ENCODE measurements at regions of chr7 and their contacts with region 1.

Region 1: GRCh38 chr7:2567679-2568278 is 9.0 kb downstream of the IQCE start:
- DNase-seq: peak in 1 of 2 donors; percentile 34
- ATAC-seq: peak; percentile 79 to 89 (median 82)
- H3K4me3 ChIP-seq: peak overlapping the region in 2 of 10 donors; percentile 20 to 21
- H3K27ac ChIP-seq: no peak overlapping the region
- H3K4me1 ChIP-seq: peaks cover 0 to 18% (median 11%) of the 10 kb centered on the region in 9 donors
- H3K27me3 ChIP-seq: no peaks in the 10 kb centered on the region
- CTCF ChIP-seq: peak; percentile 39 to 72 (median 64)

Region 2: GRCh38 chr7:2451171-2452073 is 116.4 kb before region 1 on chr7:
- intact Hi-C with region 1: loop called in 1 of 10 experiments (anchors 10 kb)
- DNase-seq: peak; percentile 87 to 91
- ATAC-seq: peak; percentile 95 to 98 (median 98)
- H3K4me3 ChIP-seq: peak overlapping the region in 9 of 10 donors; percentile 32 to 58 (median 55)
- H3K27ac ChIP-seq: peak overlapping the region in 5 of 10 donors; percentile 8 to 62 (median 44)
- H3K4me1 ChIP-seq: peaks cover 7 to 15% (median 11%) of the 10 kb centered on the region in 9 donors
- H3K27me3 ChIP-seq: no peaks in the 10 kb centered on the region
- CTCF ChIP-seq: peak; percentile 75 to 95 (median 91)

Region 3: DNA sequence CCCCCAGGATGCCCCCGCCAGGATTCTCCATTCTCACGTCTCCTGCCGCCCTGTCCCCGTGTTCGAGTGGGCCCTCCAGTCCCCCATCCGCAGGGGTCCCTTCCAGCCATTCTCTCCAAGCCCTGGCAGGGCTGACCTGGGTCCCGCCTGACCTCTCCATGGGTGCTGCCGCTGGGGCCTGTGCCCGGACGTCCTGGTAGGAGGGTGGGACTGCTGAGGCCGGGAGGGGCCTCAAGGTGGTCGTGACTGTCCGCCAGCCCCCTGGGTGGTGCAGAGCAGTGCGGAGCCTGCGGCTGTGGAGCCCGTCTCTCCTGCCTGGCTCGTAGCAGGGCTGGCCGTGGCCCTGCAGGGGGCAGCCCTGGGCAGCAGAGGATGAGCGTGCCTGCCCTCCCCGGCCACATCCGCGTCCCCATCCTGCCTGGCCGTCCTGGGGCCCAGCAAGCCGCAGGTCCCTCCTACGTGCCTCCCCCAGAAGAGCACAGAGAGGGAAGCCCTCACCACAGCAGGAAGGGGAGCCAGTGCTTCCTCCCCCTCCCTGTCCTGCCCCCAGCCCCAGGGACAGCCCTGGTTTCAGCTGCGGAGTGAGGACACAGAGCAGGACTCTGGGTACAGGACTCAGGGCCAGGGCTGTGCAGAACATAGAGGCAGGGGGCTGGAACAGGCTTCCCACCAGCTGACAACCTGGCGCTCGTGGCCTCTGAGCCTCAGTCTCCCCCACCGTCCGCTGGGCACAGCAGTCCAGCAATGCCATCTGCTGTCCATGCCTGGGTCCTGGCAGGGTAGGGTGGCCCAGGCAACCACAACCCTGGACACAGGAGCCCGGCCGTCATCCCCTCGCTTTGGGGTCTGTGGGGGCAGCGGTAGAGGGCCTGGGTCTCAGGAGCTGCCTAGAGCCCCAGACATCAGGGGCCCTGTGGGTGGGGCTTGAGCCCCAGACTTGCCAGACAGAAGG is 90.1 kb before region 1 on chr7:
- intact Hi-C with region 1: loop called in 1 of 10 experiments (anchors 10 kb)
- DNase-seq: peak; percentile 64 to 77
- ATAC-seq: peak; percentile 82 to 90 (median 86)
- H3K4me3 ChIP-seq: peak overlapping the region in 2 of 10 donors; percentile 7 to 15
- H3K27ac ChIP-seq: peak overlapping the region in 4 of 10 donors; percentile 14 to 56 (median 26)
- H3K4me1 ChIP-seq: peaks cover 14 to 37% (median 29%) of the 10 kb centered on the region in 9 donors
- H3K27me3 ChIP-seq: peaks cover 0 to 21% (median 8%) of the 10 kb centered on the region in 7 donors
- CTCF ChIP-seq: peak; percentile 60 to 89 (median 77)

Region 4: DNA sequence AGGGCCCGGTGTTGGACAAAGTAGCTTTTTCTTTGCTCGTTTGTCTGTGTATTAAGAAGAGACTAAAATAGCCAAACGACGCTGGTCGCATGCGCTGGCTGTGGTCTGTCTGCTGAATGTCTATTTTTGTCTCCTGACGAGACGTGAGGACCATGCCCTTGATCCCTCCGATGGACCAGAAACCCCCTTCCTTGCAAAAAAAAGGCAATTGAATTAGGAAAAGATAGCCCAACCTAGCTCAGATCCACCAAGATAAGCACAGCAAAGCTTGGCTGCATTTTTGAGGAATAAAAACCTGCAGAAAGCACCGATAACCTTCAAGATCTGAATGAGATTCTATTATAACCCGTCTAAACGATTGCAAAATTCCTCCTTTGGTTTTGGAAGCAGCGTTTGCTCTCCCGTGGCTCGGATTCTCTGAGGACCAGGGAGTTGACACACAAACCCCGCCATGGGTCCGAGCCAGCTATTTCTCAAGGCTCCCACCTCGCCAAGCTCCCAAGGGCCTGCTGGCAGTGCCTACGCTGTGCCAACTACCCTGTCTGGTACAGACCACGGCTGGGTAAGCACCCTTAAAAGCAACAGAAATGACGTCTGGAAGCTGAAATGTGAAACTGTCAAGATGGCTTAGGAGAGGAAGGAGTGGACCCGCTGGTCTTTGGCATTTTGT is 46.3 kb after region 1 on chr7:
- intact Hi-C with region 1: loop called in 1 of 10 experiments (anchors 2 kb)
- DNase-seq: peak in 1 of 2 donors; percentile 63
- ATAC-seq: peak; percentile 30 to 81 (median 70)
- H3K4me3 ChIP-seq: peak overlapping the region in 3 of 10 donors; percentile 8 to 28 (median 9)
- H3K27ac ChIP-seq: peak overlapping the region; percentile 40 to 89 (median 76)
- H3K4me1 ChIP-seq: peaks cover 16 to 58% (median 43%) of the 10 kb centered on the region in 9 donors
- H3K27me3 ChIP-seq: no peaks in the 10 kb centered on the region
- CTCF ChIP-seq: no peak

Region 5: GRCh38 chr7:2660585-2661408 is 93.0 kb after region 1 on chr7:
- intact Hi-C with region 1: loop called in 2 of 10 experiments (anchors 5 to 10 kb)
- DNase-seq: no peak
- ATAC-seq: peak in 1 of 8 donors; percentile 2
- H3K4me3 ChIP-seq: no peak overlapping the region
- H3K27ac ChIP-seq: no peak overlapping the region
- H3K4me1 ChIP-seq: peaks cover 8 to 30% (median 25%) of the 10 kb centered on the region in 9 donors
- H3K27me3 ChIP-seq: no peaks in the 10 kb centered on the region
- CTCF ChIP-seq: peak in 3 of 9 donors; percentile 15 to 28 (median 18)

Region 6: GRCh38 chr7:2668401-2668800 is 100.6 kb after region 1 on chr7:
- intact Hi-C with region 1: loop called in 2 of 10 experiments (anchors 5 to 10 kb)
- DNase-seq: peak in 1 of 2 donors; percentile 3
- ATAC-seq: no peak
- H3K4me3 ChIP-seq: no peak overlapping the region
- H3K27ac ChIP-seq: no peak overlapping the region
- H3K4me1 ChIP-seq: peaks cover 1 to 31% (median 15%) of the 10 kb centered on the region in 9 donors
- H3K27me3 ChIP-seq: peaks cover 0 to 22% (median 11%) of the 10 kb centered on the region in 7 donors
- CTCF ChIP-seq: no peak

Region 7: GRCh38 chr7:2680792-2681490 is 113.2 kb after region 1 on chr7:
- intact Hi-C with region 1: loop called (anchors 1 to 5 kb)
- DNase-seq: peak; percentile 85 to 88
- ATAC-seq: peak; percentile 65 to 92 (median 88)
- H3K4me3 ChIP-seq: no peak overlapping the region
- H3K27ac ChIP-seq: no peak overlapping the region
- H3K4me1 ChIP-seq: peaks cover 0 to 5% (median 3%) of the 10 kb centered on the region in 9 donors
- H3K27me3 ChIP-seq: peaks cover 0 to 37% (median 21%) of the 10 kb centered on the region in 7 donors
- CTCF ChIP-seq: peak; percentile 70 to 85 (median 80)